Cardiac septum (tissue), 1 donor: ENCODE measurements at regions of chr12 and their contacts with region 1.

Region 1: DNA sequence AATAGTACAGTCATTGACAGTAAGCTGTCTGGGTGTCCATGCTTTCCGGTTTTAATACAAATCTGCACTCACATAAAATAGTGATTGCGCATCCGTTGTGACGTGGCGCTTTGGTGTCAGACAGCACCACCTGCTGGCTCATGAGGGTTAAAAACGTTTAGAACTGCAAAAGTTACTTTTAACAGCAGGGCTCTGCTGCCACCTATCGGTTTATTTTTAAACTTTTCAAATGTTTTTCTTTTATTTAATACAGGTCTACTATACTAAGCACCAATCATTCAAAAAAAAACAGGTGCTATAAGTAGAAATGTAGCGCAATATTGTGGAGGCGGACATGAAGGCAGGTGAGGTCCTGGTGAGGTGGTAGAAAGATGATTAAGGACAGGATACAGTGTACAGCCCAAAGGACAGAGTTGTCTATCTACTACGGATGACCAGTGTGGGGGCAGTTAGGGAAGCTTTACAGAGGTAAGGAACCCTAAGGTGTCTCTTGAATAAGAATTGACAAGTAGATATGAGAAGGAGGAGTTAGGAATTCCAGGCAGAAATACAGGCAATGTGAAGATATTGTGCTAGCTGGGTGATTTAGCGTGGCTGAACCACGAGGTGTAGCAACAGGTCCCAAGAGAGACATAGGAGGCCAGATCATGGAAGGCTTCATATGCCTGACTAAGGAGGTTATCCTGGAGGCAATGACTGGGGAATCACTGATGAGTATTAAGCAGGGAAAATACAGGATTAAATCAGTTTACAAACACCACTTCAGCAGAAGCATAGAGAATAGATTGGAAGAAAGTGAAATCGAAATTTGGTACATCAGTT is 91.5 kb upstream of the PRB2 start:
- DNase-seq: peak; percentile 82

Region 2: GRCh38 chr12:10771132-10771733 is 715.6 kb before region 1 on chr12:
- intact Hi-C with region 1: loop called (anchors 2 kb)
- DNase-seq: no peak

Region 3: DNA sequence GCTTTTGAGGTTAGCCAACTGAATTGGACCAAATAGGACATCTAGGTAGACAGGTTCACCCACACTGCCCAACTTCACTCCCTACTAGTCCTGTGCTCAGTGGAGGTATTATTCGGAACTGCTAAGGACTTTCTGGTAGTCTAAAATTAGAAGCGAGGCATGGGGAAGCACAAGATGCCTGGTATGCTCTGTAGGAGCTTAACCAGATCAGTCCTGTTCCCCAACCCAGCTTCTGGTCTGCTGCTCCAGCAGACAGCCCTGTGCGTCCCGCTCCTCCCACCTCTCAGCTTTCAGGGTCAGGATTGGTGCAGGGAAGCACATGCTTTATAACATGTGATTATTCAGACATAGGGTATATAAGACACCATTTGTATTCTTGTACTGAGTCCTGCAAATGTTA is 248.6 kb before region 1 on chr12:
- intact Hi-C with region 1: loop called (anchors 10 kb)
- DNase-seq: no peak

Region 4: GRCh38 chr12:11508699-11509098 is 21.9 kb after region 1 on chr12:
- intact Hi-C with region 1: no loop called
- DNase-seq: no peak

Region 5: GRCh38 chr12:11730299-11731041 is 243.6 kb after region 1 on chr12:
- intact Hi-C with region 1: no loop called
- DNase-seq: no peak